ENCODE measurements at regions of chr2 and their contacts with region 1.

Region 1: DNA sequence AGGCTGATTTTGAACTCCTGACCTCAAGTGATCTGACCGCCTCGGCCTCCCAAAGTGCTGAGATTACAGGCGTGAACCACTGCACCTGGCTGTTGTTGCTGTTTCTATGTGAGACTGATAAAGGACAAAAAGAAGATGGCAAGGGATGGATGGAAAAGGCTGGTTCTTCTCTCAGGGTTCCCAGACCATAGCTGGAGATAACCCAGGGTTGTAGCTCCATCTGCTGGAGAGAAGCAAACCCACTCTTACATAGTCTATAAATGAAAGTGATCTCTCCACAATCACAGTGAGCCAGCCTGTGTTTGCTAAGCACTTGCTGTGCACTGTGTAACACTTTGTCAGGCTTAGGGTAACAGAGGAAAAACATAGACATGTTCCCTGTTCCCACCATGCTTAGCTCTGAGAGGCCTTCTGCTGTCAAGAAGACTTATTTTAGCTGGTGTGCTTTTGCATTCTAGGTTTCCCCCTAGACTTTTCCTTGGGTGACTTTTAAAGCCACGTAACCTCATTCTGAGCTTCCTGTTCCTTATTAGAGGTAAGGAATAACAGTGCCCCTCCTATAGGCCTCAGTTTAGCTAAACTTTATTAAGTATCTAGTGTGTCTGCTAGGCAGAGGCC is 49.7 kb downstream of the LIMS1 start:
- DNase-seq: peak; percentile 78
- H3K4me3 Mint-ChIP-seq: no peak overlapping the region
- H3K27ac Mint-ChIP-seq: no peak overlapping the region
- H3K4me1 Mint-ChIP-seq: peaks cover 20% of the 10 kb centered on the region
- H3K27me3 Mint-ChIP-seq: no peaks in the 10 kb centered on the region

Region 2: GRCh38 chr2:107008843-107009242 is 1575.2 kb before region 1 on chr2:
- CTCF ChIA-PET with region 1: no interaction called
- intact Hi-C with region 1: no loop called
- DNase-seq: no peak
- H3K4me3 Mint-ChIP-seq: no peak overlapping the region
- H3K27ac Mint-ChIP-seq: no peak overlapping the region
- H3K4me1 Mint-ChIP-seq: no peaks in the 10 kb centered on the region
- H3K27me3 Mint-ChIP-seq: no peaks in the 10 kb centered on the region

Region 3: GRCh38 chr2:108169982-108170625 is 413.9 kb before region 1 on chr2:
- CTCF ChIA-PET with region 1: no interaction called
- intact Hi-C with region 1: loop called (anchors 10 kb)
- DNase-seq: no peak
- H3K4me3 Mint-ChIP-seq: no peak overlapping the region
- H3K27ac Mint-ChIP-seq: no peak overlapping the region
- H3K4me1 Mint-ChIP-seq: no peaks in the 10 kb centered on the region
- H3K27me3 Mint-ChIP-seq: peaks cover 6% of the 10 kb centered on the region

Region 4: GRCh38 chr2:108271691-108272253 is 312.2 kb before region 1 on chr2:
- CTCF ChIA-PET with region 1: no interaction called
- intact Hi-C with region 1: no loop called
- DNase-seq: no peak
- H3K4me3 Mint-ChIP-seq: no peak overlapping the region
- H3K27ac Mint-ChIP-seq: no peak overlapping the region
- H3K4me1 Mint-ChIP-seq: no peaks in the 10 kb centered on the region
- H3K27me3 Mint-ChIP-seq: peaks cover 5% of the 10 kb centered on the region

Region 5: GRCh38 chr2:108396845-108397244 is 187.2 kb before region 1 on chr2:
- CTCF ChIA-PET with region 1: interaction called, 5 read pairs
- intact Hi-C with region 1: loop called (anchors 2 kb)
- DNase-seq: peak; percentile 39
- H3K4me3 Mint-ChIP-seq: no peak overlapping the region
- H3K27ac Mint-ChIP-seq: no peak overlapping the region
- H3K4me1 Mint-ChIP-seq: no peaks in the 10 kb centered on the region
- H3K27me3 Mint-ChIP-seq: no peaks in the 10 kb centered on the region

Region 6: GRCh38 chr2:108448678-108449493 is 135.1 kb before region 1 on chr2 and contains the start of gene GCC2:
- CTCF ChIA-PET with region 1: interaction called, 3 read pairs
- intact Hi-C with region 1: loop called (anchors 2 kb)
- DNase-seq: peak; percentile 97
- H3K4me3 Mint-ChIP-seq: peak within 1 kb of the TSS; percentile 87
- H3K27ac Mint-ChIP-seq: peak within 1 kb of the TSS; percentile 91
- H3K4me1 Mint-ChIP-seq: peaks cover 27% of the 10 kb centered on the region
- H3K27me3 Mint-ChIP-seq: no peaks in the 10 kb centered on the region
- total RNA-seq, gene GCC2: 33.5 to 39.4 TPM

Region 7: DNA sequence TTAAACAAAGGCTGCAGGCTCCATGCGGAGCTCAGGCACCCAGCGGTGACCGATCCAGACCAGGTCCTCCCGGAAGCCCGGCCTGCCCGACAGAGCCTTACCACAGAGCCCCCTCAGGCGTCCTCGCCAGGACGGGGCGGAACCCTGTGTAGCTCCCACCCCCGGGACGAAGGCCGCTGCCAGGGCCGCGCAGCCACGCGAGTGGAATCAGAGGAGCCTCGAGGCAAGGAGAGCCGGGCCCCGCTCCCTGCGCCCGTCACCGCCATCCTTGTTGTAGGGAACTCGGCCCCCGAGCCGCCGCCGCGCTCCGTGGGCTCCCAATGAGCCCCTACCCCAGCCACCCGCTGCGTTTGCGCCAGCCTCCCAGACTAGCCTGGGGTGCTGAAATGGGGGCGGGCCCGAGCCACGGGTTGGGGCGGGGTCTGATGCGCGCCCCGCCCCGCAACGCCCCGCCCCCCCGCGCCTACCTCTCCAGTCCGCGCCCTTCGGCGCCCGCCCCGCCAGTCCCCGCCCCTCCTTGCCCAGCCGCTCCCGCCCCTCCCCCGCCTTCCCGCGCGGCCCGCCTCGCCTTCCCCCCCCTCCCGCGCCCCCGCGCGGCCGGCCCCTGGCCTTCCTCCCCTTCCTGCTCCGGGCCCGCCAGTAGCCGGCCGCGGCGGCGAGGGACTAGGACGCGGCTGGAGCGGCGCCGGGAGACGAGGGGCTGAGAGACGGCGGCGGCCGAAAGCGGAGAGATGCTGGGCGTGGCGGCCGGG is 50.0 kb before region 1 on chr2 and contains the start of gene LIMS1:
- CTCF ChIA-PET with region 1: interaction called, 5 read pairs
- intact Hi-C with region 1: loop called (anchors 1 kb)
- DNase-seq: peak; percentile 89
- H3K4me3 Mint-ChIP-seq: peak within 1 kb of the TSS; percentile 96
- H3K27ac Mint-ChIP-seq: peak within 1 kb of the TSS; percentile 82
- H3K4me1 Mint-ChIP-seq: peaks cover 31% of the 10 kb centered on the region
- H3K27me3 Mint-ChIP-seq: no peaks in the 10 kb centered on the region
- total RNA-seq, gene LIMS1: 43.8 to 47.1 TPM

Region 8: GRCh38 chr2:108594132-108594981 is 10.3 kb after region 1 on chr2:
- CTCF ChIA-PET with region 1: interaction called, 14 read pairs
- intact Hi-C with region 1: no loop called
- DNase-seq: peak; percentile 30
- H3K4me3 Mint-ChIP-seq: peak overlapping the region; percentile 17
- H3K27ac Mint-ChIP-seq: no peak overlapping the region
- H3K4me1 Mint-ChIP-seq: peaks cover 49% of the 10 kb centered on the region
- H3K27me3 Mint-ChIP-seq: no peaks in the 10 kb centered on the region

Measured in activated naive CD4-positive, alpha-beta T cell treated with anti-CD3 and anti-CD28 coated beads for 36 hours (primary cell).